ENCODE measurements at regions of chr20 and their contacts with region 1.

Region 1: GRCh38 chr20:34096699-34097420 is 15.2 kb downstream of the EIF2S2 start:
- DNase-seq: no peak
- H3K4me3 ChIP-seq: no peak overlapping the region
- H3K27ac ChIP-seq: no peak overlapping the region
- H3K4me1 ChIP-seq: no peaks in the 10 kb centered on the region
- H3K27me3 ChIP-seq: no peaks in the 10 kb centered on the region
- CTCF ChIP-seq: no peak
- POLR2A ChIP-seq: no peak

Region 2: DNA sequence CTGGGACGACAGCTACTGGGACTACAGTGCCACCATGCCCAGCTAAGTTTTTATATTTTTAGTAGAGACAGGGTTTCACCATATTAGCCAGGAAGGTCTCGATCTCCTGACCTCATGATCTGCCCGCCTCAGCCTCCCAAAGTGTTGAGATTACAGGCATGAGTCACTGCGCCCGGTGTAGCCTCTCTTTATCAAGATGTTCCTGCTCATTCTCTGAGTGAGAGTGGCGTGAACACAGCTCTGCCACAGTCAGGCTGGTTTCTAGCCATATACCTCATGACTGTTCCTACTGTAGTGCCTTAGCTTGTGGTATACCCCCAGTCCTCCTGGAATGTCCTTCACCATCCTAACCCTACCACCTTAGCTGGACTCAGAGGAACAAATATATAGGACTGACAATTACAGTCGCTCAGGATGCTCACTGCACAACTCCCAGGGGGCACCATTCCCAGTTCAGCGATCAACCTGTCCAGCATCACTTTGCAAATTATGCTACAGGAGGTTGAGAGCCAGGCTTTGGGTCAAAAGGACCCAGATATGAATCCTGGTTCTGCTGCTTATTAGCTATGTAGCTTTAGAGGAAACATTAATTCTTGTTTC is 199.4 kb before region 1 on chr20:
- intact Hi-C with region 1: no loop called
- DNase-seq: no peak
- H3K4me3 ChIP-seq: no peak overlapping the region
- H3K27ac ChIP-seq: no peak overlapping the region
- H3K4me1 ChIP-seq: no peaks in the 10 kb centered on the region
- H3K27me3 ChIP-seq: no peaks in the 10 kb centered on the region
- CTCF ChIP-seq: no peak
- POLR2A ChIP-seq: no peak

Region 3: GRCh38 chr20:34729416-34729815 is 632.6 kb after region 1 on chr20:
- intact Hi-C with region 1: loop called (anchors 5 kb)
- DNase-seq: no peak
- H3K4me3 ChIP-seq: no peak overlapping the region
- H3K27ac ChIP-seq: no peak overlapping the region
- H3K4me1 ChIP-seq: no peaks in the 10 kb centered on the region
- H3K27me3 ChIP-seq: no peaks in the 10 kb centered on the region
- CTCF ChIP-seq: no peak
- POLR2A ChIP-seq: no peak